MCF 10A (cell line): ENCODE measurements at regions of chr12 and their contacts with region 1.

Region 1: DNA sequence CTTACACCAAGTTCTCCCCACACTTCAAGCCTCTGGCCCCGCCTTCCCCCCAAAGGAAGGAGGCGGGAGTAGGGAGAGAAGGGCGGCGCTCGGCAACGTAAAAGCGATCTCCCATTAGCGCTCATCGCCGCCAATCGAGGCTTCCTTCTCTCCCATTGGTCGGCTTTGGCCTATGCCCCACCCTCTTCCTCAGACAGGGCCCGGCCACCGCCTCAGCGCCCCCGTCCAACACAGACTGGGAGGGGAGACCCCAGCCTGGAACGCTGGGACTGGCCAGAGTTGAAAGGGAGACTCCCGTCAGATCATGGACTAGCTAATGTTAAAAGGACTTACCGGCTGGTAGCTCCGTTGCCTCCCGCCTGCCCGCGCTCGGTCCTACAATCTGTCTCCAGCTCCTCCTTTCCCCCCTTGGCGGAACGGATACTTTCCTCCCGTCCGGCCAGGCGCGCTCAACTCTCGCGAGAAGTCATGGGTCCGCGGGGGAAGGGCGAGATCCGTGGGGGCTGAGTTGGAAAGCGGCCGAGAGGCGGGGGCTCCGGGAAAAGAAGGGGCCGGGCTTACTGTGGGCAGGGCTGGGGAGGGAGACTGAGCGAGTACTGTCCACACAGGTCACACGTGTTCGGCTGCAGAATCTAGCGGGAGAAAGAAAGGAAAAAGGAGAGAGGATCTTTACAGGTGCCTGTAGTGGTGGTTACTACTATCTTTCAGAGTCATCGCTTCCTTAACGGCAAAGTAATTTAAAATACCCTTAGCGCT is at the start of gene ATF7:
- DNase-seq: peak; percentile 98
- H3K4me3 Mint-ChIP-seq: peak within 1 kb of the TSS; percentile 96
- H3K27ac Mint-ChIP-seq: peak within 1 kb of the TSS; percentile 89
- H3K4me1 Mint-ChIP-seq: peaks cover 18% of the 10 kb centered on the region
- H3K27me3 Mint-ChIP-seq: no peaks in the 10 kb centered on the region
- CTCF ChIP-seq: no peak
- total RNA-seq, gene ATF7: 39.6 and 40.8 TPM in 2 replicates

Region 2: GRCh38 chr12:53543539-53543938 is 82.6 kb before region 1 on chr12:
- CTCF ChIA-PET with region 1: interaction called, 11 read pairs
- POLR2A ChIA-PET with region 1: interaction called, 9 read pairs
- intact Hi-C with region 1: loop called (anchors 1 kb)
- DNase-seq: peak; percentile 73
- H3K4me3 Mint-ChIP-seq: no peak overlapping the region
- H3K27ac Mint-ChIP-seq: peak overlapping the region; percentile 57
- H3K4me1 Mint-ChIP-seq: peaks cover 19% of the 10 kb centered on the region
- H3K27me3 Mint-ChIP-seq: no peaks in the 10 kb centered on the region
- CTCF ChIP-seq: peak; percentile 76

Region 3: DNA sequence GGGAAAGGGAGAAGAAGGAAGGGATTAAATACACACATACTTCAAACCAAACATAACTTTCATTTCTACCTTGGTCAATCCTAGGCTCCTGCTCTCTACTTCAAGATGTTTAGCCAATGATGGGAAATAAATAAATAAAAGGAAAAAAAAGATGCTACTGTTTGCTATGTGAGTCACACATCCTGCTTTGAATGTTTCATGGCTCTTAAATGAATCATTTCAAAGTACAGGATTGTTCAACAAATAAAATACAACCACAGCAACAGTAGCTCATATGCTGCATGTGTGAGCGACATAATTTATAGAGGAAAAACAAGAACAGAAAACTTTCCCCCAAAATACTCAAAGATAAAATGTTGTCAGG is 64.6 kb before region 1 on chr12:
- CTCF ChIA-PET with region 1: interaction called, 3 read pairs
- POLR2A ChIA-PET with region 1: interaction called, 25 read pairs
- intact Hi-C with region 1: no loop called
- DNase-seq: peak; percentile 83
- H3K4me3 Mint-ChIP-seq: peak overlapping the region; percentile 52
- H3K27ac Mint-ChIP-seq: peak overlapping the region; percentile 90
- H3K4me1 Mint-ChIP-seq: peaks cover 49% of the 10 kb centered on the region
- H3K27me3 Mint-ChIP-seq: no peaks in the 10 kb centered on the region
- CTCF ChIP-seq: no peak

Region 4: GRCh38 chr12:53588123-53588522 is 38.0 kb before region 1 on chr12:
- CTCF ChIA-PET with region 1: no interaction called
- POLR2A ChIA-PET with region 1: no interaction called
- intact Hi-C with region 1: no loop called
- DNase-seq: no peak
- H3K4me3 Mint-ChIP-seq: no peak overlapping the region
- H3K27ac Mint-ChIP-seq: no peak overlapping the region
- H3K4me1 Mint-ChIP-seq: peaks cover 10% of the 10 kb centered on the region
- H3K27me3 Mint-ChIP-seq: no peaks in the 10 kb centered on the region
- CTCF ChIP-seq: no peak

Region 5: DNA sequence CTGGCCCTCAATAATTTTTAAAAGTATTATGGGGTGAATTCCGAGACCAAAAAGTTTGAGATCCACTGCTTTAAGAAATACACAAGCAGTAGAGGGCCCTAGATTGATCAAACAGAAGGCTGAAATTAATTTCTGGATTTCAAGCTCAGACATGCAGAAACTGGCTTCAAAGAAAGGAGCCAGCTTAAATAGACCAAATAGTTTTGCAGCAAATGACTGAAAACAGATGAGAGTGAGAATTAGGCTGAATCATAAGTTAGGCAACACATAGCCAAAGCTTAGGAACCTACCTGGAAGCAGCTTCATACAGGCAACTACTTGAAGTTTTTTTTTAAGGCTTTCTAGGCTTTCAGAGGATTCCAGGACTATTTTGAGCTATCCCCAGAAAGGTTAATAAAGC is 12.3 kb before region 1 on chr12:
- CTCF ChIA-PET with region 1: interaction called, 6 read pairs
- POLR2A ChIA-PET with region 1: interaction called, 132 read pairs
- intact Hi-C with region 1: no loop called
- DNase-seq: peak; percentile 58
- H3K4me3 Mint-ChIP-seq: no peak overlapping the region
- H3K27ac Mint-ChIP-seq: peak overlapping the region; percentile 74
- H3K4me1 Mint-ChIP-seq: peaks cover 17% of the 10 kb centered on the region
- H3K27me3 Mint-ChIP-seq: no peaks in the 10 kb centered on the region
- CTCF ChIP-seq: no peak

Region 6: DNA sequence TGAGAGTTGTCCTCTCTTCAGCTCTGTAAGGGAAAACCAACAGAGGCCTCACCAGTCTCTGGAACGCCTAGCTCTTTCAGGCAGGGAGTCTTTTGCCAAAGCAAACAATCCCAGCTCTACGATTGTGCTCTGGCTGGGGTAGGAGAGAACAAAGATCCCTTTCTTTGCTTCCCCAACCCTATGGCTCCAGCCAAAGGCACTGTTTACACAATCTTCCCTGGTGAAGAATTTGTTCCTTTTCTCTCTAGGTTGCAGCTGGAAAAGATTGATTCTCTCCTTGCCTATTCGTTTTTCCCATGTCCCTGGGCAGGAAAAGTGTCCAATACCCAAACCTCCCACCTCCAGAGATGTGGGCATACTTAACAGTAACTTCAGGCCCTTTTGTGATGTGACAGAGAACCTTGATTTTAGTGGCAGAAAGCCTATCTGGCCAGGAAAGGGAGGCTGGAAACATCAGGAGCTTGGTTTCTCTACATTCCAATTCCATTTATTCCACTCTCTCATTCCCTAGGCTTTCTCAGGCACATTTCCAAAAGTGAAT is 33.0 kb after region 1 on chr12:
- CTCF ChIA-PET with region 1: no interaction called
- POLR2A ChIA-PET with region 1: interaction called, 11 read pairs
- intact Hi-C with region 1: no loop called
- DNase-seq: peak; percentile 77
- H3K4me3 Mint-ChIP-seq: no peak overlapping the region
- H3K27ac Mint-ChIP-seq: peak overlapping the region; percentile 82
- H3K4me1 Mint-ChIP-seq: peaks cover 16% of the 10 kb centered on the region
- H3K27me3 Mint-ChIP-seq: no peaks in the 10 kb centered on the region
- CTCF ChIP-seq: no peak

Region 7: GRCh38 chr12:53738406-53739213 is 112.5 kb after region 1 on chr12:
- CTCF ChIA-PET with region 1: no interaction called
- POLR2A ChIA-PET with region 1: no interaction called
- intact Hi-C with region 1: no loop called
- DNase-seq: no peak
- H3K4me3 Mint-ChIP-seq: no peak overlapping the region
- H3K27ac Mint-ChIP-seq: no peak overlapping the region
- H3K4me1 Mint-ChIP-seq: peaks cover 10% of the 10 kb centered on the region
- H3K27me3 Mint-ChIP-seq: peaks cover 14% of the 10 kb centered on the region
- CTCF ChIP-seq: no peak